ENCODE measurements at regions of chr11 and their contacts with region 1.

Region 1: DNA sequence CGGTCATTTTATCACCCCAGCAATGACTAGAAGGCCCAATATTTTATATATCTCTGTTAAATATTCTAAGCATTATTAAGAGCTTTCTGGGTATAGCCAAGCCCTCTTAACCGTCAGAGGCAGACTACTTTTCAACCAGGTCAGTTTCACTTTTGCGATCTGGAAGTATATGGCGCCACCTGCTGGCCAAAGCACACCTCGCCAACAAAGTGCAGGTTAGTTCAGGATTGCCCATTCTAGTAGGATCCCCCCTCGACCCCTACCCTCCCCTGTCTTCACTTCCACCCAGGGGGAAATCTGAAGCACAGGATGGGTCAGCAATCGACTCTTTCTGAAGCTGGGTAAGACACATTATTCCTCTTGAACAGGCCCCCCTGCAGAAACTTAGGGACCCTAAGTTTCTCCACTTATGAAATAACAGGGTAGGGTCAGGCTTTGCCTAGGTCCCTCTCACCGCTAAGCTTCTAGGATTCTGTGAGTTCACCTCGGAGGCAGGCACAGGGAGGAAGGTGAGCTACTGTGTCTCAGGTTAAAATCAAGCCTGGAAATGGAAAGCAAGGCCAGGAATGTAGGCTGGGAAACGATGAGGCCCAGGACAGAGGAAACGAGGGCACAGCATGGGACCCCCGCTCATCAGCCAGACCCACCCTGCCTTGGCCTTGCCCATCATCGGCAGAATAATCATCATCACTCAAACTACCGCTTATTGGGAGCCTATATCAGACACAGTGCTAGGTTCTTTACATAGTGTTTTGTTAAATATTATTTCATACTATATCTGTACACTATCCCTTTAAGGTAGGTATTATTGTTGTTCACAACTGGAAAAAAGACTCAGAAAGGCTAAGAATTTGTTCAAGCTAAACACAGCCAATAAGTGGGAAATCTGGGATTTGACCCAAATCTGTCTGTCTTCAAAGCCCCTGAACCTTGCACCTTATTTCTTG is 35.6 kb downstream of the KCNJ1 start:
- DNase-seq: peak; percentile 62
- ATAC-seq: peak; percentile 94
- H3K4me3 ChIP-seq: no peak overlapping the region
- H3K27ac ChIP-seq: no peak overlapping the region
- H3K4me1 ChIP-seq: peaks cover 4% of the 10 kb centered on the region; the same call in 1 of the 2 replicates
- H3K27me3 ChIP-seq: peaks cover 2 to 8% of the 10 kb centered on the region in 2 experiments; a peak in 2 of 5 replicates
- CTCF ChIP-seq: peak; percentile 84
- EP300 ChIP-seq: no peak
- POLR2A ChIP-seq: no peak
- RAD21 ChIP-seq: peak; percentile 53

Region 2: DNA sequence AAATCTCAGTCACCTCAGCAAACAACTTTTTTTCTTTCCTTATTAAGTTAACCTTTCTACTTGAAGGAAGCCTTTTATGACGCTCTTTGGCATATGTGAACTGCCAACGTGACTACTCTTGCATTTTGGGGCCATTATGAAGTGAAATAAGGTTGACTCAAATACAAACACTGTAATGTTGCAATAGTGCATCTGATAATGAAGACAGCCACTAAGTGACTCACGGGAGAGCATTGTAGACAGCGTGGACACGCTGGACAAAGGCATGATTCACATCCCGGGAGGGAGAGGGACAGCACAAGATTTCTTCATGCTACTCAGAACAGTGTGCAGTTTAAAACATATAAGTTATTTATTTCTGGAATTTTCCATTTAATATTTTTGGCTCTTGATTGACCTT is 804.9 kb before region 1 on chr11:
- CTCF ChIA-PET with region 1: interaction called, 12 read pairs
- POLR2A ChIA-PET with region 1: no interaction called
- in situ Hi-C with region 1: loop called (anchors 5 kb)
- intact Hi-C with region 1: loop called (anchors 1 kb)
- DNase-seq: no peak
- ATAC-seq: no peak
- H3K4me3 ChIP-seq: no peak overlapping the region
- H3K27ac ChIP-seq: no peak overlapping the region
- H3K4me1 ChIP-seq: no peaks in the 10 kb centered on the region
- H3K27me3 ChIP-seq: no peaks in the 10 kb centered on the region
- CTCF ChIP-seq: no peak
- EP300 ChIP-seq: no peak
- POLR2A ChIP-seq: no peak
- RAD21 ChIP-seq: no peak

Region 3: DNA sequence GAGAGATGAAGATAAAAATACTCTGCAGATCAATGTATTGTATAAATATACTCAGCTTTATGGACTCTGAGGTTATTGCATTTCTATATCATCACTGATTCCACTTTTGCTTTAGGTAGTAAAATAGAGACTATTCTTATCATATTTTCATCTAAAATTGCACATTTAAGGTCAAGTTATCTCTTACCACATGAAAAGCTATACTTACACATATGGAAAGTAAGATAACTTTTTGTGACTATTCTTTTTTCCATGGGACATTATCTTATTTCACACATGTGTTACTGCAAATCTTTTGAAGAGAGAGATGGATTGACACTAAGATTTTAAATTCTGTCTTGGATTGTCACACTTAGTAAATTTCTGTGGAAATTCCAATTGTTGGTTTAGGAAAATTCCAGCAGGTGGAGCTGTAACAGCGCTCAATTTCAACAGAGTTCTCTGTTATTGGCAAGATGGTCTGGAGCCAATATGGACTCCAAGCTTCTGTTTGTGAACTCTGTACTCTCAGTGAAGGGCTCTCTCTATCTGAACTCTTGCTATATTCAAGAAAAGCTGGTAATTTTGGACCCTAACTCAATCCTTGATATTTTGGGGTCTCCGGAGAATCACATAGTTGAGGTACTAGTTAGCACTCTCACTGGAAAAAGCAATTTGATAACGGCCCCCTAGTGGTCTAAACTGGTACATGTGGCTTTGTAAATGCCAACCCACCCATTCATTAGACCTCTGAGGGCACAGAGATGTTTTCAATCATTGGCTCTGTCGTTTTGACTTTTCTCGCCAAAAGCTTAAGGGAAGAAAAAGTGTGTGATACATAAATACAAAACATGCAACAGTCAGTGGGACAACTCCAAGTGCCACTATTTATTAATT is 673.8 kb before region 1 on chr11:
- CTCF ChIA-PET with region 1: interaction called, 12 read pairs
- POLR2A ChIA-PET with region 1: no interaction called
- in situ Hi-C with region 1: no loop called
- intact Hi-C with region 1: loop called (anchors 1 kb)
- DNase-seq: peak; percentile 44
- ATAC-seq: peak; percentile 83
- H3K4me3 ChIP-seq: no peak overlapping the region
- H3K27ac ChIP-seq: no peak overlapping the region
- H3K4me1 ChIP-seq: no peaks in the 10 kb centered on the region
- H3K27me3 ChIP-seq: no peaks in the 10 kb centered on the region
- CTCF ChIP-seq: peak; percentile 41
- EP300 ChIP-seq: no peak
- POLR2A ChIP-seq: no peak
- RAD21 ChIP-seq: 0 out of 2 replicates have a peak, but pooled peaks have one; percentile 24

Region 4: DNA sequence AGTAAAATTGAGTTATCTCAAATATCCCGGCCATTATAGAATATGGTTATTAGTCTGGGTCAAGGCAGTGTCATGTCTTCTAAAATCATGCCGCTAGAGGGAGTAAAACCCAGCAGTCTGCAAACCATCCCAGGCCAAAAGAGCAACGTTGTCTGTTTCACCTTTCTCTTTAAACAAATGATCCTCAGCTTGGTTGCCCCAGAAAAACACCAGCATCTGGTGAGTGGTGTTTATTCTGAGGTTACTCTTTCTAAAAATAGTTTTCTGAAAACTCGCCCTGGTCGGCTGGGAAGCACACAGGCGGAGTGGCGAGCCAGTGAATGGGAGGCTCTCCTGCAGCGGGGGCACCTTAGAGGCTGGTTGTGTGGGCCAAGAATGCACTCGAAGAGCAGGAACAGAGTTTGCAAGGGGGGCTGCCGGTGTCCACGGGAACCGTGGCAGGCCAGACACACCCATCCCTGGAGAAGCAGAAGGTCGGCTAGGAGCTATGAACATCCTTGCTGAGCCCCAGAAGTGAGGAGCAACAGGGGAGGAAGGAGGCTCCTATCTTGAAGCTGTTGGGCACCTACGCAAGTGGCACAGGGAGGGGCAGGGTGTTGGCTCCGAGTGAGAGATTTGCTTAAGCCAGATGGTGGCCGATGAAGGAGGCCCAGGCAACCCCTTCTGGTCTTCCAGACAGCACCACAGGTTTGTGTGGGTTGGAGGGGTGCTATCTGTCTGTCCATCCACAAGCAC is 541.2 kb before region 1 on chr11:
- CTCF ChIA-PET with region 1: interaction called, 4 read pairs
- POLR2A ChIA-PET with region 1: no interaction called
- in situ Hi-C with region 1: no loop called
- intact Hi-C with region 1: loop called (anchors 2 kb)
- DNase-seq: peak; percentile 21
- ATAC-seq: peak; percentile 94
- H3K4me3 ChIP-seq: no peak overlapping the region
- H3K27ac ChIP-seq: no peak overlapping the region
- H3K4me1 ChIP-seq: peaks cover 12% of the 10 kb centered on the region
- H3K27me3 ChIP-seq: peaks cover 0 to 8% of the 10 kb centered on the region in 2 experiments; a peak in 1 of 5 replicates
- CTCF ChIP-seq: peak; percentile 73
- EP300 ChIP-seq: no peak
- POLR2A ChIP-seq: no peak
- RAD21 ChIP-seq: peak; percentile 58

Region 5: GRCh38 chr11:128776424-128777284 is 54.8 kb before region 1 on chr11:
- CTCF ChIA-PET with region 1: no interaction called
- POLR2A ChIA-PET with region 1: no interaction called
- in situ Hi-C with region 1: no loop called
- intact Hi-C with region 1: loop called (anchors 1 kb)
- DNase-seq: no peak
- ATAC-seq: peak; percentile 89
- H3K4me3 ChIP-seq: no peak overlapping the region
- H3K27ac ChIP-seq: no peak overlapping the region
- H3K4me1 ChIP-seq: no peaks in the 10 kb centered on the region
- H3K27me3 ChIP-seq: peaks cover 2 to 38% of the 10 kb centered on the region in 2 experiments; a peak in 4 of 5 replicates
- CTCF ChIP-seq: peak; percentile 43
- EP300 ChIP-seq: no peak
- POLR2A ChIP-seq: no peak
- RAD21 ChIP-seq: no peak

Region 6: DNA sequence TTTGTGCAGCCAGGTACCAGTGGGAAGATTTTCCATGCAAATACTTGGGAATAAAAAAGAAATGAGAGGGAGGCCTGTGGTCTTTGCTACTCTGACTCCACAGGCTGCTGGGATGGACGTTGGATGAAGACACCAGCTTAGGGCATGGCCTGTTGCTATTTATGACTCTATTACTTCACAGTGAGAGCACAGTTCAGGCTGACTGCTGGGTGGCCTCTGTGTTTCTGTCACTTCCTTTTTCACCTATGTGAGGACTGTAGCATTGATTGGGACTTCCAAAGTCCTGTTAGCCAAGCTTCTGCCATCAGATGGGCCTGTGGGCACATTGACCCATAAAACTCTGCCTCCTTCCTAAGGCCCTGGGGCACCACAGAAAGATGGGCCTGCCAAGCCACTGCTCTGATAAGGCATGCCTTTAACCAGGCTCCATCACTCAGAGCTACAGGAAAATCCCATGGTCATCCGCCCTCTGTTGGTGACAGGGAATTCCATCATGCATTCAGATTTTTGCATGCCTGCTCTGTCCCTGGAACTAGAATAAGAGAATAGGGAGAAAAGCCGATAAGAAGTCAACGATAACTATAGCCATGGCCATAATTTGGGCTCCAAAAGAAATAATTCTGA is 29.0 kb before region 1 on chr11:
- CTCF ChIA-PET with region 1: no interaction called
- POLR2A ChIA-PET with region 1: no interaction called
- in situ Hi-C with region 1: no loop called
- intact Hi-C with region 1: no loop called
- DNase-seq: no peak
- ATAC-seq: peak; percentile 82
- H3K4me3 ChIP-seq: no peak overlapping the region
- H3K27ac ChIP-seq: no peak overlapping the region
- H3K4me1 ChIP-seq: no peaks in the 10 kb centered on the region
- H3K27me3 ChIP-seq: peaks cover 0 to 32% of the 10 kb centered on the region in 2 experiments; a peak in 2 of 5 replicates
- CTCF ChIP-seq: peak; percentile 33; the same call in 1 of the 2 replicates
- EP300 ChIP-seq: no peak
- POLR2A ChIP-seq: no peak
- RAD21 ChIP-seq: no peak

Measured in HepG2 (cell line).